ENCODE measurements at regions of chr17 and their contacts with region 1.

Region 1: DNA sequence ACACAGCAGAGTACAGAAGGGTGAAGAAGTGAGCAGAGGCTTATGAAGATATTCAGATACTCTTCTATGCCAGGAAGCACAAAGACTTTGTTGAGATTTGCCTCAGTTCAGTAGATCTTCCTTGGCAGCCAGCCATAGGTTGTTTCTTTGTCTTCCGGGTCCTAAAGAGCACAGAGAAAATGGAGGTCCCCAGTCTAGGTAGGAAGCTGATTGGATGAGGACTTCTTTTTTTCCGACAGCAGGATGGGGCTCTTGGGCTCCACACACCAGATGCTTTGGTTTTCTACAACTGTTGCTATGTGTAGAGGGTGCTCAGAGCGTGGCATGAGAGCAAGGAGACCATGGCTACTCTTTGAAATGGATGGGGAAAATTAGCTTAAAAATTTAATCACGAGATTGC is 8.3 kb upstream of the CDC6 start:
- DNase-seq: no peak
- ATAC-seq: no peak
- H3K4me3 ChIP-seq: no peak overlapping the region
- H3K27ac ChIP-seq: no peak overlapping the region
- H3K4me1 ChIP-seq: peaks cover 6% of the 10 kb centered on the region
- H3K27me3 ChIP-seq: no peaks in the 10 kb centered on the region
- CTCF ChIP-seq: no peak
- POLR2A ChIP-seq: no peak
- RAD21 ChIP-seq: no peak

Region 2: DNA sequence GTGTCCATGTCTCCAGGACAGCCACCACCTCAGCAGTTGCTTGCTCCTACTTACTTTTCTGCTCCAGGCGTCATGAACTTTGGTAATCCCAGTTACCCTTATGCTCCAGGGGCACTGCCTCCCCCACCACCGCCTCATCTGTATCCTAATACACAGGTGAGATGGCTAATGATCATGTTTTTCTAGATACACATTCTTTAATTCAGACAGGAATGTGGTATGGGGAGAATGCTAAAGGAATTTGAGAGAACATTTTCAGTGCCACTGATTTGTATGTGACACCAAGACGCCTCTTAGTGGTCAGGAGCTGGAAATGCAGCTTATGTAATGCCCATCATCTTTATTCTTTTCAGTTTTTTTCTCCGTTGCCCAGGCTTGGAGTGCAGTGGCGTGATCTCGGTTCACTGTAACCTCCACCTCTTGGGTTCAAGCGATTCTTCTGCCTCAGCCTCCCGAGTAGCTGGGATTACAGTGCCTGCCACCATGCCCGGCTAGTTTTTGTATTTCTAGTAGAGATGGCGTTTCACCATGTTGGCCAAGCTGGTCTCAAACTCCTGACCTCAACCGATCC is 111.1 kb before region 1 on chr17:
- CTCF ChIA-PET with region 1: no interaction called
- POLR2A ChIA-PET with region 1: no interaction called
- dilution Hi-C with region 1: no loop called
- in situ Hi-C with region 1: no loop called
- intact Hi-C with region 1: no loop called
- DNase-seq: peak; percentile 69
- ATAC-seq: peak; percentile 96
- H3K4me3 ChIP-seq: no peak overlapping the region
- H3K27ac ChIP-seq: no peak overlapping the region
- H3K4me1 ChIP-seq: peaks cover 6% of the 10 kb centered on the region
- H3K27me3 ChIP-seq: no peaks in the 10 kb centered on the region
- CTCF ChIP-seq: peak; percentile 76
- POLR2A ChIP-seq: no peak
- RAD21 ChIP-seq: peak; percentile 76

Region 3: DNA sequence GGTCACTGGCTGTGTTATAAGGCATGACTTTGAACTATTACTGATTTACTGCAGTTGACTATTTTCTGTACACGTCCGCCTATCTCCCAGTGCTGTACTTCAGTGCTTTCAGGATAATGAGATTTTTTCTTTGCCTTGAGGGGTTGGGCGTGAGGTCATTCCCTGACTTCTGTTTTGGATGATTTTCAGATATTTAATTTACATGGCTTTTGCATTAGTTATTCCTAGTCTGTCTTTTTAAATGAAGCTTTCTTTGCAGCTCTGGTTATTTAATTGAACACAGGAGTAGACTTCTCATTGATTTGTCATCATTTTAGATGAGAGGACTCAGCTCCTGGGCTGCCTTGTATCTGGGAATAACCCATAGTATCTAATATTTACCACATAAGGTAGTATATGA is 36.6 kb before region 1 on chr17:
- CTCF ChIA-PET with region 1: interaction called, 3 read pairs
- POLR2A ChIA-PET with region 1: no interaction called
- dilution Hi-C with region 1: no loop called
- in situ Hi-C with region 1: no loop called
- intact Hi-C with region 1: loop called (anchors 5 kb)
- DNase-seq: no peak
- ATAC-seq: no peak
- H3K4me3 ChIP-seq: no peak overlapping the region
- H3K27ac ChIP-seq: no peak overlapping the region
- H3K4me1 ChIP-seq: no peaks in the 10 kb centered on the region; the same call in 1 of the 2 replicates
- H3K27me3 ChIP-seq: no peaks in the 10 kb centered on the region
- CTCF ChIP-seq: no peak
- POLR2A ChIP-seq: no peak
- RAD21 ChIP-seq: no peak

Region 4: GRCh38 chr17:40259505-40259904 is 19.9 kb before region 1 on chr17:
- CTCF ChIA-PET with region 1: no interaction called
- POLR2A ChIA-PET with region 1: no interaction called
- dilution Hi-C with region 1: no loop called
- in situ Hi-C with region 1: no loop called
- intact Hi-C with region 1: no loop called
- DNase-seq: no peak
- ATAC-seq: no peak
- H3K4me3 ChIP-seq: no peak overlapping the region
- H3K27ac ChIP-seq: no peak overlapping the region
- H3K4me1 ChIP-seq: no peaks in the 10 kb centered on the region
- H3K27me3 ChIP-seq: no peaks in the 10 kb centered on the region
- CTCF ChIP-seq: no peak
- POLR2A ChIP-seq: no peak
- RAD21 ChIP-seq: no peak

Region 5: DNA sequence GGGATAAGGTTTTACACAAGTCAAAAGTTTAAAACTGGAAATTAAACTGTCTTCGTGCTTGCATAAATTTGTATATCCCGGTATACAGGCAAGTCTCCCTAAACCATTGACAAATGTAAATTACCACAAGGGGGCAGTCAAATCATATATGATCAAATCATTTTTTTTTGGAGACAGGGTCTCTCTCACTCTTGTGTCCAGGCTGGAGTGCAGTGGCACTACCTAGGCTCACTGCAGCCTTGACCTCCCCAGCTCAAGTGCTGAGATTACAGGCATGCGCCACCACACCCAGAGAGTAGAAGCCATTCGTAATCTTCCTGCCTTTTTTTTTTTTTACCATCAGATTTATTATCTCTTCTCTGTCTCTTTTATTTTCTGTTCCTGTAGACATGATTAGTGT is 119.8 kb after region 1 on chr17:
- CTCF ChIA-PET with region 1: no interaction called
- POLR2A ChIA-PET with region 1: no interaction called
- dilution Hi-C with region 1: no loop called
- in situ Hi-C with region 1: no loop called
- intact Hi-C with region 1: no loop called
- DNase-seq: peak; percentile 74
- ATAC-seq: peak; percentile 75
- H3K4me3 ChIP-seq: no peak overlapping the region
- H3K27ac ChIP-seq: no peak overlapping the region
- H3K4me1 ChIP-seq: no peaks in the 10 kb centered on the region
- H3K27me3 ChIP-seq: no peaks in the 10 kb centered on the region
- CTCF ChIP-seq: peak; percentile 65
- POLR2A ChIP-seq: no peak
- RAD21 ChIP-seq: peak; percentile 59

Region 6: DNA sequence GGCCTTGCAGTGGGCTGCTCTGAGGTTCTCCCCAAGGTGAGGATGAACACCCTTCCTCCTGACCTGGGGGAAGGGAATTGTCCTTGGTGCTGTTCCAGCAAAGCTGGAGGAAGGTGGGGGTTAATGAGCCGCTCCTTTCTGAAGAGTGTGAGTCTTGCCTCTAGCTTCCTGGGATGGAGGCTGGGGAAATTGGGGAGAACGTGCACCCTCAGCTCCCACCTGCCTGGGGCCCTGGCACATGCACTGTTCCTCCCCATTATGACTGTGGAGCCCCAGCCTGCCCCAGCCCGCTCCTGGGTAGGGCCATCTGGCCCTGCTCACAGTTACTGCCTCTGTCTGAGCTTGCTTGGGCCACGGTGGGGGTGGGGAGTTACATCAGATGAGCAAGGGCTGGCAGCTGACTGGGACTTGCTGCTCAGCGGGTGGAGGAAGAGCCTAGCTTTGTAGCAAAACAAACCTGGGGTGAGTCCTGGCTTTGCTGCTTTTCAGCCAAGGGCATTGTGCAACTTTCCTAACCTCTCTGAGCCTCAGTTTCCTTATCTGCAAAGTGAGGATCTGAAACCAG is 211.0 kb after region 1 on chr17:
- CTCF ChIA-PET with region 1: no interaction called
- POLR2A ChIA-PET with region 1: no interaction called
- dilution Hi-C with region 1: no loop called
- in situ Hi-C with region 1: no loop called
- intact Hi-C with region 1: no loop called
- DNase-seq: peak; percentile 81
- ATAC-seq: peak; percentile 47
- H3K4me3 ChIP-seq: no peak overlapping the region
- H3K27ac ChIP-seq: peak overlapping the region; percentile 49
- H3K4me1 ChIP-seq: peaks cover 42% of the 10 kb centered on the region
- H3K27me3 ChIP-seq: no peaks in the 10 kb centered on the region
- CTCF ChIP-seq: no peak
- POLR2A ChIP-seq: no peak
- RAD21 ChIP-seq: peak; percentile 13; the same call in 1 of the 2 replicates

Measured in IMR-90 (cell line).